ENCODE measurements at regions of chr10 and their contacts with region 1.

Region 1: DNA sequence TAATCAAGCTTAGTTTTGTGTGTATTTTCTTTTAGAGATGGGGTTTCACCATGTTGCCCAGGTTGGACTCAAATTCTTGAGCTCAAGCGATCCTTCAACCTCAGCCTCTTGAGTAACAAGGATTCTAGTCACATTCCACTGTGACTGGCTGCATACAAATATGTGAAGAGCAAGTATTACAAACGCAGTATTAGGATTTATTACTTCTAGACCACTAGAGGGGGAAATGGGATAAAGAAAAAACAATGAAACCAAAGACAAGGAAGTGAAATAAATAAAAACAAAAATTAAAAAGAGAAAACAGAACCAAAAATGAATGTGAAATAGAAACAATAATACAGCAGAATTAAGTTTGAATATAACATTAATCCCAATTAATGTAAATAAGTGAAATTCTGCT is 308.7 kb downstream of the ANKRD30A start:
- DNase-seq: no peak
- H3K4me3 ChIP-seq: no peak overlapping the region
- H3K27ac ChIP-seq: no peak overlapping the region
- H3K4me1 ChIP-seq: no peaks in the 10 kb centered on the region
- H3K27me3 ChIP-seq: no peaks in the 10 kb centered on the region
- CTCF ChIP-seq: peak; percentile 34

Region 2: GRCh38 chr10:36899651-36900050 is 534.4 kb before region 1 on chr10:
- CTCF ChIA-PET with region 1: no interaction called
- POLR2A ChIA-PET with region 1: no interaction called
- intact Hi-C with region 1: loop called (anchors 5 kb)
- DNase-seq: no peak
- H3K4me3 ChIP-seq: no peak overlapping the region
- H3K27ac ChIP-seq: no peak overlapping the region
- H3K4me1 ChIP-seq: no peaks in the 10 kb centered on the region
- H3K27me3 ChIP-seq: no peaks in the 10 kb centered on the region
- CTCF ChIP-seq: no peak

Region 3: GRCh38 chr10:37403776-37404175 is 30.3 kb before region 1 on chr10:
- CTCF ChIA-PET with region 1: no interaction called
- POLR2A ChIA-PET with region 1: no interaction called
- intact Hi-C with region 1: no loop called
- DNase-seq: no peak
- H3K4me3 ChIP-seq: no peak overlapping the region
- H3K27ac ChIP-seq: no peak overlapping the region
- H3K4me1 ChIP-seq: no peaks in the 10 kb centered on the region
- H3K27me3 ChIP-seq: no peaks in the 10 kb centered on the region
- CTCF ChIP-seq: no peak